AG04449 (cell line): ENCODE measurements at regions of chr12 and their contacts with region 1.

Region 1: GRCh38 chr12:53220801-53221202 is 11.2 kb downstream of the RARG start:
- DNase-seq: peak; percentile 28
- H3K4me3 ChIP-seq: peak overlapping the region; percentile 95
- CTCF ChIP-seq: no peak

Region 2: GRCh38 chr12:53251477-53252348 is 30.9 kb after region 1 on chr12:
- CTCF ChIA-PET with region 1: interaction called, 74 read pairs
- POLR2A ChIA-PET with region 1: interaction called, 11 read pairs
- DNase-seq: no peak
- H3K4me3 ChIP-seq: peak overlapping the region; percentile 88
- CTCF ChIP-seq: peak; percentile 46

Region 3: DNA sequence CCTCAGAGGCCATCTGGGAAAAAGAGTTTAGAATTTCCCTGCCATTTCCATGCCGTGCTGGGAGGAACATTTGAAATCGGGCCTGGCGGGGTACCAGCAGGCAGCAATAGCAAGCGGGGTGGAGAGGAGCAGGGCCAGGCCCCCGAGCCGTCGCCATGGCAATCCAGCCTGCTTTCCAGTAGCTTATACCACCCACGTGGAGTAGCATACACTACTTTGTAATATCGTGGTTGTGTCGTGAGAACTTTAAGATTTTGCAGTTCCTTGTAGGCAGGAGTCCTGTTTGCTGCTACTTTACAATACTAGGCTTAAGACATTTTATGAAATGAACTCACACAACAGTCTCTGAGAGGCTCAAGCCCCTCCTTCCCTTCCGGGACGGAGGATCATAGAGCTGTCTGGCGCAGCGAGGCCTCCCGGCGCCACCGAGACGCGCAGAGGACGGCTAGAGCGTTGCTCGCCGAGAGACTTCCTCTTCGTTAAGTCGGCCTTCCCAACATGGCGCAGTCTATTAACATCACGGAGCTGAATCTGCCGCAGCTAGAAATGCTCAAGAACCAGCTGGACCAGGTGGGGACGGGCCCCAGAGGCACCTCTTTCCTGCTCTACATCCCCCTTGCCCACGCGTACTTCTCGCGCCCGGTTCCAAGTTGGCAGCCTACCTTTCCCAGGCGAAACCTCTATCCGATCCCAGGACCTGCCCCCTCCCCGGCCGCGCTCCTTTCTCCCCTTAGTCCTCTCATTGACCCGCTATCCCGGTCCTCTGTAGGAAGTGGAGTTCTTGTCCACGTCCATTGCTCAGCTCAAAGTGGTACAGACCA is 74.5 kb after region 1 on chr12 and contains the start of gene PFDN5:
- CTCF ChIA-PET with region 1: interaction called, 659 read pairs
- POLR2A ChIA-PET with region 1: interaction called, 9 read pairs
- DNase-seq: peak; percentile 51
- H3K4me3 ChIP-seq: peak within 1 kb of the TSS; percentile 93
- CTCF ChIP-seq: peak; percentile 1

Region 4: GRCh38 chr12:53344824-53345485 is 124.2 kb after region 1 on chr12:
- CTCF ChIA-PET with region 1: interaction called, 10 read pairs
- POLR2A ChIA-PET with region 1: no interaction called
- DNase-seq: no peak
- H3K4me3 ChIP-seq: peak overlapping the region; percentile 70
- CTCF ChIP-seq: peak; percentile 89